ENCODE measurements at regions of chr4 and their contacts with region 1.

Region 1: GRCh38 chr4:165131247-165131832 is 18.7 kb upstream of the TMEM192 start:
- DNase-seq: peak; percentile 40
- H3K4me3 ChIP-seq: no peak overlapping the region
- CTCF ChIP-seq: peak; percentile 85

Region 2: DNA sequence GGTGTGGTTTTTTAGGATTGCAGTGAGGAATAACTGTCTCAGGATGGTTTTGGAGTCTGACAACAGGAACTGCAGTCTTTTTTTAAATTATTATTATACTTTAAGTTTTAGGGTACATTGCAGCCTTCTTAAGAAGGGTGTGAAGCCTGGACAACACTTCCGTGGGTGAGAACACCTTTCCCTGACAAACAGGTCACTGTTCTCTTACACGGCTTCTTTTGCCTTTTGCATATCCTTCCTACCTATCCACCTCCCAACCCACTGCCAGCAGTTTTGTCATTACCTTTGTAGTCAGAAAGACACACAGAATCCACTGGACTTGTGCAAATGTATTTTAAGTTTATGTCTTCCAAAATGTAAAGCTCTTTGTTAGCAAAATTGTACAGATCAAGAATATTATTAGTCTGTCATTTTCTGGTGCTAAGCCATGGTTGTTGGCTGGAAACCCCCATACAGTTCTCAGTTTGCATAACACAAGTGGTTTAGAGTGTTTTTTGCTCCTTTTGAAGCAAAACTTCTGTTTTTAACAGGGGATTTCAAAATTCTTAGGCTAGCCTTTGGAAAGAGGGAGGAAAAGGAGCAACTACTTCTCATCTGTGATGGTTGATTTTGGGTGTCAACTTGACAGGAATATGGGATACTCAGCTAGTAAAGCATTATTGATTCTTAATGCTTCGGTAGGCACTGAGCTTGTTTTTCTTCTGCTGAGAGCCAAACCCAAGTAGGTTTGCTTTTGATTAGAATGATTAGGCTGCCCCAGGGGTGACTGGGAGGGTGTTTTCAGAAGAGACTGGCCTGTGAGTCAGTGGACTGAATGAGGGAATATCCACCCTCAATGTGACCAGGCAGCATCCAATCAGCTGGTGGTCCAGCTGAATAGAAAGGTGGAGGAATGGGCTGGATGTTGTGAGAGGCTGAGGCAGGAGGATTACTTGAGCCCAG is 46.7 kb after region 1 on chr4:
- in situ Hi-C with region 1: no loop called
- DNase-seq: no peak
- H3K4me3 ChIP-seq: no peak overlapping the region
- CTCF ChIP-seq: no peak

Region 3: DNA sequence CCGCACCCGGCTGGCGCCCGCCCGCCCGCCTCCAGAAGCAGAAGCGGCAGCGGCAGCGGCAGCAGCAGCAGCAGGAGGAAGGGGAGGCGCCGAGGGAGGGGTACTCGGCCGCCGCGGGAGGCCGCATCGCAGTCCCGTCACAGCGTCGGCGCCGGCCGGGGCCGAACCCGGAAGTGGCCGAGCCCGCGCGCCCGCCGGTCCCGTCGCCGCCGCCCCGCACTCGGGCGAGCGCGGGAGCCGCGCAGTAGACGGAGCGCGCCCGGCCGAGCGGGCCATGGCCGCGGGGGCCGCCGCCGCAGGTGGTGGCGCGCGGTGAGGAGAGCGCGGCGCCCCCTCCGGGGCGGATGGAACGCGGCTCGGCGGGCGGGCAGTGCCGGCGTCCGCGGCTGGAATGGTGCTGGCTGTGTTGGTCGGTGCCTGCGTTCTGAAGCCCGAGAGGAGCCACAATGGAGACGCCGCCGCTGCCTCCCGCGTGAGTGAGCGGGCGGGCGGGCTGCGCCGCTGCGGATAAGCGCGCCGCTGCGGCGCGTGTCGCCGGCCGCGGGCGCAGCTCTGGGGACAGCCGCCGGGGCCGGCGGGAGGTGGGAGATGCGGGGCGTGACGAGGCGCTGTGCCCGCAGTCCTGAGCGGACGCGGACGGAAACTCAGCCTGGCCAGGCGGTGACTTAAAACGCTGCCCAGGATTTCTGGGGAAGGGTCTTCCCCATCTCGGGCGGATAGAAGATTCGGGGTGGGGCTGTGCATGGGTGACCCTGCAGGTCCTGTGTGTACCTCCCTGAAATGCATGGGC is 76.3 kb after region 1 on chr4 and contains the start of gene KLHL2:
- in situ Hi-C with region 1: loop called (anchors 10 kb)
- DNase-seq: no peak
- H3K4me3 ChIP-seq: peak within 1 kb of the TSS; percentile 83
- CTCF ChIP-seq: no peak

Region 4: GRCh38 chr4:165464813-165465381 is 333.6 kb after region 1 on chr4:
- in situ Hi-C with region 1: loop called (anchors 10 kb)
- DNase-seq: peak; percentile 37
- H3K4me3 ChIP-seq: no peak overlapping the region
- CTCF ChIP-seq: peak; percentile 65

Measured in astrocyte of the cerebellum (primary cell).